ENCODE measurements at regions of chr11 and their contacts with region 1.

Region 1: GRCh38 chr11:119334174-119334930 is at the start of gene RNF26:
- DNase-seq: peak; percentile 97
- H3K4me3 ChIP-seq: peak within 1 kb of the TSS; percentile 84 to 96
- H3K27ac ChIP-seq: peak within 1 kb of the TSS; percentile 48 to 76
- H3K4me1 ChIP-seq: peaks cover 16 to 37% of the 10 kb centered on the region in 2 experiments; a peak in 3 of 4 replicates
- H3K27me3 ChIP-seq: no peaks in the 10 kb centered on the region
- CTCF ChIP-seq: no peak
- EP300 ChIP-seq: no peak
- RAD21 ChIP-seq: no peak
- polyA plus RNA-seq, gene RNF26: 26.6 and 31.9 TPM in 2 replicates

Region 2: GRCh38 chr11:118911892-118912744 is 422.2 kb before region 1 on chr11:
- CTCF ChIA-PET with region 1: no interaction called
- POLR2A ChIA-PET with region 1: no interaction called
- DNase-seq: no peak
- H3K4me3 ChIP-seq: peak overlapping the region in 1 of 2 experiments; percentile 4; a peak in 3 of 4 replicates
- H3K27ac ChIP-seq: peak overlapping the region; percentile 87 to 100
- H3K4me1 ChIP-seq: peaks cover 85 to 94% of the 10 kb centered on the region in 2 experiments
- H3K27me3 ChIP-seq: no peaks in the 10 kb centered on the region
- CTCF ChIP-seq: no peak
- EP300 ChIP-seq: peak in 1 of 2 experiments; percentile 77; a peak in 1 of 4 replicates
- RAD21 ChIP-seq: no peak

Region 3: DNA sequence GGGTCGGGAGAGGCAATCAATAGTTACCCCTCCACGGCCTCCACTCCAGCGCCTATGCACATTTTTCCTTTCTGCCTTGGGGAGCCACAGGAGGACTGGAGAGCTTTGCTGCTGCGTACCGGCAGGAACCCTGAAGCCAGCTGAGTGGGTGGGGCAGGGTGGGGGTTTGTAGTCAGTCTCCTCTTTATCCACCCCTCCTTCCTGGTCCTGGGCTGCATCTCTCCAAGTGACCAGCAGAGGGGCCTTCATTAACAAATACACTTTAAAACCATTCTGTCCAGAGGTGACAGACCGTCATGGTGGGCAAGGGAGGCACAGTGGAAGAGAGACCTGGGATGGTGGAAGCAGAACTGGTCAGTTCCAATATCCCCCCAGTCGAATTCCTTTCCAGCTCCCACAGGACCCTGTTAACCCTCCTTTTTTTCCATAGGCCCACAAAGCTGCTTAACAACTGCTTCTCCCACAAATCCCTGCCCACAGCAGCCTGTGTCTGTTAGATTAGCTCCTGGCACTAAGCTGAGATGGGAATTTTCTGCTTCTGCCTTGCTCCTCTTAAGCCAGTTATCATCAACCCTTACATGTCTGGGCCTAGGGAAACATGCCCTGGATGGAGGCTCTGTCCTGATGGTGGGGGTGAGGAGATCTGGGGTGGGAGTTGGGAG is 189.4 kb before region 1 on chr11:
- CTCF ChIA-PET with region 1: interaction called, 10 read pairs
- POLR2A ChIA-PET with region 1: no interaction called
- DNase-seq: peak; percentile 93
- H3K4me3 ChIP-seq: no peak overlapping the region
- H3K27ac ChIP-seq: no peak overlapping the region
- H3K4me1 ChIP-seq: peaks cover 0 to 13% of the 10 kb centered on the region in 2 experiments; a peak in 1 of 4 replicates
- H3K27me3 ChIP-seq: no peaks in the 10 kb centered on the region; the same call in 1 of the 2 replicates
- CTCF ChIP-seq: peak; percentile 60
- EP300 ChIP-seq: no peak
- RAD21 ChIP-seq: peak; percentile 68

Region 4: DNA sequence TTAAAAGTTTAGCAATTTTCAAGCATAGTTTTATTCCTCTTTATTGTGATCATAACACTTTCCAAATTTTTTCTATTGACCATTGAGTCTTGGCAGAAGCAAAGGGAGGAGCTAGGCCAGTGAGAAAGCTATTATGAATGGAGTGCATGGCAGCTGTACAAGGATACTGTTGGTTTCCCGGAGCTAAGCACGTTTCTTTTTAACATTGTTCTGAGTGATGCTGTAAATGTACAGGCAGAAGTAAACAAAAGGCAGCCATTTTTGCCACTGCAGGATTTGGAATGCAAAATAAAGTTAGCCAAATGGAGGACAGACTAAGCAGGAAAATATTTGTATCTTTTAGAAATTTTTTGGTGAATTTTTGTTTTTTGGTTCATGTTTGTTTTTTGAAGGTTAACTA is 112.0 kb before region 1 on chr11:
- CTCF ChIA-PET with region 1: no interaction called
- POLR2A ChIA-PET with region 1: no interaction called
- DNase-seq: peak; percentile 31
- H3K4me3 ChIP-seq: no peak overlapping the region
- H3K27ac ChIP-seq: peak overlapping the region; percentile 24 to 42; a peak in 3 of 4 replicates
- H3K4me1 ChIP-seq: peaks cover 0 to 18% of the 10 kb centered on the region in 2 experiments; a peak in 2 of 4 replicates
- H3K27me3 ChIP-seq: no peaks in the 10 kb centered on the region
- CTCF ChIP-seq: no peak
- EP300 ChIP-seq: no peak
- RAD21 ChIP-seq: no peak

Region 5: GRCh38 chr11:119315131-119316015 is 19.0 kb before region 1 on chr11:
- CTCF ChIA-PET with region 1: interaction called, 106 read pairs
- POLR2A ChIA-PET with region 1: interaction called, 4 read pairs
- DNase-seq: peak; percentile 72
- H3K4me3 ChIP-seq: peak overlapping the region; percentile 55 to 68; a peak in 3 of 4 replicates
- H3K27ac ChIP-seq: no peak overlapping the region
- H3K4me1 ChIP-seq: peaks cover 12 to 31% of the 10 kb centered on the region in 2 experiments; a peak in 2 of 4 replicates
- H3K27me3 ChIP-seq: no peaks in the 10 kb centered on the region
- CTCF ChIP-seq: peak; percentile 19; the same call in 1 of the 2 replicates
- EP300 ChIP-seq: no peak
- RAD21 ChIP-seq: no peak

Region 6: DNA sequence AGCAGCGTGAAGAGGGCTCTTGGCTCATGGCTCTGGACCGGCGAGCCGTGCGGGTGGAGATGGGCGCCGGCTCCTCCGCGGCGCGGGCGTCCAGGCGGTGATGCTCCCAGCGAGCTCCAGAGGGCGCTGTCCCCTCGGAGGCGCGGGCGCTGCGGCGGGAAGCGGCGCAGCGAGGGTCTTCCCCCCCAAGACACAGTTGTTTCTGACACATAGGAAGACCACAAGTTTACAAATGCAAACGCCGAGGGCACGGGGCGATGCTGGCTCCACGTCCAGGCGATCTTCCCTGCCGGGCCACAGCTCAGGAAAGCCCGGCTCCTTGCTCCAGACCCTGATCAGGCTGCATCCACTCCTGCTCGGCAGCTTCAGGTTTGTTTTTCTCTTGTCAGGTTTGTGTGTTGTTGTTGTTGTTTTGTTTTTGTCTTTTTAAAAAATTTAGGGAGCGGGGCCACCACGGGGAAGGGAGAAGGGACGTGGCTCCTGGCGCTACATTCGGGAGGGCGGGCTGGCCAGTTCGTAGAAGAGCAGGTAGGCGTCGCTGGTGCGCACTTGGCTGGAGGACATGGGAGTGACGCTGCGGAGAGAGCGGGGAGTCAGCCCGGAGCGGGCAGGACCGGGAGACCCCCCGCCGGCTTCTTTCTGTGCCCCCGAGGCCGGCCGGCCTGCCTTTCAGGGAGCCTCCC is 22.1 kb after region 1 on chr11:
- CTCF ChIA-PET with region 1: interaction called, 36 read pairs
- POLR2A ChIA-PET with region 1: no interaction called
- DNase-seq: peak; percentile 95
- H3K4me3 ChIP-seq: peak overlapping the region; percentile 42 to 79
- H3K27ac ChIP-seq: peak overlapping the region in 1 of 2 experiments; percentile 26; a peak in 1 of 4 replicates
- H3K4me1 ChIP-seq: peaks cover 8 to 22% of the 10 kb centered on the region in 2 experiments; a peak in 3 of 4 replicates
- H3K27me3 ChIP-seq: no peaks in the 10 kb centered on the region
- CTCF ChIP-seq: peak; percentile 96
- EP300 ChIP-seq: no peak
- RAD21 ChIP-seq: peak; percentile 78

Region 7: GRCh38 chr11:119373921-119374631 is 39.7 kb after region 1 on chr11:
- CTCF ChIA-PET with region 1: interaction called, 191 read pairs
- POLR2A ChIA-PET with region 1: interaction called, 7 read pairs
- DNase-seq: peak; percentile 84
- H3K4me3 ChIP-seq: peak overlapping the region in 1 of 2 experiments; percentile 27; a peak in 2 of 4 replicates
- H3K27ac ChIP-seq: peak overlapping the region in 1 of 2 experiments; percentile 98; a peak in 2 of 4 replicates
- H3K4me1 ChIP-seq: peaks cover 9 to 94% of the 10 kb centered on the region in 2 experiments
- H3K27me3 ChIP-seq: no peaks in the 10 kb centered on the region
- CTCF ChIP-seq: peak; percentile 88
- EP300 ChIP-seq: peak in 1 of 2 experiments; percentile 26; a peak in 1 of 4 replicates
- RAD21 ChIP-seq: peak; percentile 96

Region 8: DNA sequence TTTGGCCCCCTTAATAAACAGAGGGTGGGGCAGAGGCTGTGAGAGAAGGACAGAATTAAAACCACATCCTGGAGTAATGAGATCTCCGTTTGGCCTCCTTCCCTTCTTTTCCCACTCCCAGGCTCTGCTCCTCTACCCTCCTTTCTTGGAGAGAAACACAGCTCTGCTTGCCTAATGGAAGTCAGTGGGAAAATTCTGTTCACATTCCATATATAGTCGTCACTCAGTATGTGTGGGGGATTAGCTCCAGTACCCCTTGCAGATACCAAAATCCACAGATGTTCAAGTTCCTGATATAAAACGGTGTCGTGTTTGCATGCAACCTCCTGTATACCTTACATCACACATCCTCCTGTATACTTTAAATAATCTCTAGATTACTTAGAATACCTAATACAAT is 126.2 kb after region 1 on chr11:
- CTCF ChIA-PET with region 1: interaction called, 13 read pairs
- POLR2A ChIA-PET with region 1: no interaction called
- DNase-seq: no peak
- H3K4me3 ChIP-seq: no peak overlapping the region
- H3K27ac ChIP-seq: peak overlapping the region in 1 of 2 experiments; percentile 79; a peak in 2 of 4 replicates
- H3K4me1 ChIP-seq: peaks cover 10 to 19% of the 10 kb centered on the region in 2 experiments; a peak in 3 of 4 replicates
- H3K27me3 ChIP-seq: no peaks in the 10 kb centered on the region
- CTCF ChIP-seq: no peak
- EP300 ChIP-seq: no peak
- RAD21 ChIP-seq: no peak

Region 9: DNA sequence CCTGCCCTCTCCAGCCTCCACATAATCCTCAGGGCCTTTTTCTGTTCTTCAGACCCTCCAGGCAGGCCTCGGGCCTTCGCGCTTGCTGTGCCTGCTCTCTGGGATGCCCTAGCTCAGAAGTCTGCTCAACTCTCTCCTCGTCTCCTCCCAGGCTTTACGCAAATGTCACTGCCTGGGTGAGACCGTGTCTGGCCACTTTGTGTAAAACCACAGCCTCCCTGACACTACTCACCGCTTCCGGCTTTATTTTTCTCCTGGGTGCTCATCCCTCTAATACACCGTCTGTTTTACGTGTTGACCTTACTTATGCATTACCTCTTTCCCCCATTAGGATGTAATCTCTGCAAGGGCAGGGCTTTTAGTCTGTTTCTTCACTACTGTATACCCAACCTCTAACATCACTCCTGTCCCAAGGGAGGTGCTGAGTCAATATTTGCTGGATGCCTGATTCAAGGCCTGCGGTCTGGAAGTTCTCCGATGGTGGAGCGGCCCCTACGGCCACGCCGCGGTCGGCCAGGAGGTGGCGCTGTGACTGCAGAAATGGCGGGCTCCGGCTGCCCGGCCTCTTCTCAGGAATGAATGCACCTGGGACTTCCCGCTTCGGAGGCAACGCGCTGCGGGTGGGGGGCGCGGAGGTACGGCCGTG is 146.8 kb after region 1 on chr11:
- CTCF ChIA-PET with region 1: interaction called, 11 read pairs
- POLR2A ChIA-PET with region 1: no interaction called
- DNase-seq: peak; percentile 92
- H3K4me3 ChIP-seq: peak overlapping the region in 1 of 2 experiments; percentile 53; a peak in 1 of 4 replicates
- H3K27ac ChIP-seq: no peak overlapping the region
- H3K4me1 ChIP-seq: peaks cover 0 to 5% of the 10 kb centered on the region in 2 experiments; a peak in 1 of 4 replicates
- H3K27me3 ChIP-seq: peaks cover 6% of the 10 kb centered on the region; the same call in 1 of the 2 replicates
- CTCF ChIP-seq: peak; percentile 97
- EP300 ChIP-seq: no peak
- RAD21 ChIP-seq: peak; percentile 95